Tibial artery (tissue), 4 donors: ENCODE measurements at regions of chr15 and their contacts with region 1.

Region 1: GRCh38 chr15:97783240-97783639 is 177.3 kb upstream of the ARRDC4 start:
- DNase-seq: no peak
- H3K4me3 ChIP-seq: no peak overlapping the region
- H3K27ac ChIP-seq: no peak overlapping the region
- H3K4me1 ChIP-seq: no peaks in the 10 kb centered on the region
- H3K27me3 ChIP-seq: no peaks in the 10 kb centered on the region
- CTCF ChIP-seq: no peak

Region 2: GRCh38 chr15:97728791-97729190 is 54.4 kb before region 1 on chr15:
- intact Hi-C with region 1: no loop called
- DNase-seq: no peak
- H3K4me3 ChIP-seq: no peak overlapping the region
- H3K27ac ChIP-seq: no peak overlapping the region
- H3K4me1 ChIP-seq: no peaks in the 10 kb centered on the region
- H3K27me3 ChIP-seq: no peaks in the 10 kb centered on the region
- CTCF ChIP-seq: no peak

Region 3: DNA sequence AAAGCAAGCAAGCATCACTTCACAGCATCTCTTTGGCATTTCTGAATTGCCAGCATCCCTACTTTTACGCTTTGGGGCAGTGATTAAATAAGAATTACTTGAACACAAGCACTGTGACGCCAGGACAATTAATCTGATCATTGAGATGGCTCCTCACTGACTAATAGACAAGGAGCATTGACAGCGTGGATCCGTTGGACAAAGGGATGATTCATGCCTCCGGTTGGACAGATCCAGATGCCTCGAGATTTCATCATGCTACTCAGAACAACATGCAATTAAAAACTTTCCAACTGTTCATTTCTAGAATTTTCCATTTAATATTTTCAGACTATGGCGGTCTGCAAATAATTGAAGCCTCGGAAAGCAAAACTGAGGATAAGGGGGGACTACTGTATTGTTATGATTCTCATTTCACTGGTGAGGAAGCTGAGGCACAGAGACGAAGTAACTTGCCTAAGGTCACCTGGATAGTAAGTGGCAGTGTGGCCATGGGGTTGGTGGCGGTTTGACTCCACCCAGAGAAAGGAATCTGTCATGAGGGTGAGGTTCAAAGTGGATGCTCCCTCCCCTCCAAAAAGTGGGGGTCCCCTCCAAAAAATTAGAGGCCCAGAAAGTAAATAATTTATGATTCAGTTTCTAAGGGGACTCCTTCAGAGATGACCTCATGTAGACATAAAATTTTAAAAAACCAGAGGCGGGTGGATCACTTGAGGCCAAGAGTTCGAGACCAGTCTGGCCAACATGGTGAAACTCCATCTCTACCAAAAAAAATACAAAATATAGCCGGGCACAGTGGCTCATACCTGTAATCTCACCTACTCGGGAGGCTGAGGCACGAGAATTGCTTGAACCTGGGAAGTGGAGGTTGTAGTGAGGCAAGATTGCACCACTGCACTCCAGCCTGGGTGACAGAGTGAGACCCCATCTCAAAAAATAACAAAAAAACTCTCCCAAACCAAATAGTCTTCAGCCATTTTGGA is 1236.6 kb after region 1 on chr15:
- intact Hi-C with region 1: loop called (anchors 10 kb)
- DNase-seq: no peak
- H3K4me3 ChIP-seq: no peak overlapping the region
- H3K27ac ChIP-seq: no peak overlapping the region
- H3K4me1 ChIP-seq: peaks cover 0 to 8% (median 3%) of the 10 kb centered on the region in 4 donors
- H3K27me3 ChIP-seq: no peaks in the 10 kb centered on the region
- CTCF ChIP-seq: no peak